Heart left ventricle (tissue), 16 donors: ENCODE measurements at regions of chr1 and their contacts with region 1.

Region 1: DNA sequence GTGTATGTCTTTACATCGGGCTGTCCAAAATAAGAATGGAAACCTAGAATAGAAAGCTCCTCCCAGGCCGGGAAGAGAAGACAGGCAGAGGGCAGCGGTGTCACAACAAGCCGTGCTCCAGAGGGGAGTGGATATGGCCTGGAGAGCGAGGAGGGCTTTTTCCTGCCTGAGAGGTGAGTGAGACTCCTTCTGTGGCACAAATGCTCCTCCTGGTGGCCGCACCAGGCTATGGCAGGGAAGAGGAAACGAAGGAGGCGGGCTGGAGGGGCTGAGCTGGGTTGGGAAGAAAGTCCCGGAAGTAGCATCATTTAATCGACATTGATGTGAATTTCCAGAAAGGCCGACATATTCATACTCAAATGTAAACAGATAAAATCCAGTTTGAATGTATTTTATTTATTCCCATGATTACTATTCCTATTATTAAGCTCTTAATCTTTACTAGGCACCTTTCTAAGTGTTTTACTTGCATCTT is 54.7 kb downstream of the MEF2D start:
- DNase-seq: peak; percentile 69 to 89 (median 78)
- ATAC-seq: peak in 3 of 4 donors; percentile 91 to 94 (median 92)
- H3K4me3 ChIP-seq: no peak overlapping the region
- H3K27ac ChIP-seq: no peak overlapping the region
- H3K4me1 ChIP-seq: peaks cover 0 to 7% (median 0%) of the 10 kb centered on the region in 12 donors
- H3K27me3 ChIP-seq: peaks cover 7 to 61% (median 38%) of the 10 kb centered on the region in 9 donors
- CTCF ChIP-seq: peak; percentile 91 to 98 (median 94)
- POLR2A ChIP-seq: no peak

Region 2: DNA sequence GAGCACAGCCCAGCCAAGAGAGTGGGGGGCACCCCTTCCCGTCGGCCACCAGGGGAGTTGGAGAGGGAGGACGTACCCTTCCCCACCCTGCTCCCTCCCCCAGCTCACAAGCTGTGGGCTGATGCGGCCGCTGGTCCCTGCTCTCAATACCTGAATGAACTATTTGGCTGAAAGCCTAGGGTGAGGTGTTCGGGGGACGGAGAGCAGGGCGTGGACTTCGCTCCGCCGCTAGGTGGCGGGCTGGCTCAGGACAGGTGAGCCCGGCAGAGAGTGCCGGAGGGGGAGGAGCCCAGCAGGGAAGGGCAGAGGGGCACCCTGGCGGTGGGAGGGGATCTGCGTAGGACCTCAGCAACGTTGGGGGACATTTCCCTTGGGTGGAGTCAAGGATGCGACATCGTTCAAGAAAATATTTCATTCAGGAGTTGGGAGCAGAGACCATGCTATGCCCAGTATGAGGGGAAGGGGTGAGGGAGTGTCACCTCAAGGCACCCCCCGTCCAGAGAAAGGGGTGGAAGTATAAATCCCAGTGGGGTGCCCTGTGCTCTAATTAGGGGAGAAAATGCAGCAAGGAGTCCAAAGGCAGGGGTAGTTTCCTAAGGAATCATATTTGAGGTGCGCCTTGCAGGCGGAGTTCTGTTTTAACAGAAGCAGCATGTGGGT is 88.8 kb before region 1 on chr1:
- intact Hi-C with region 1: loop called in 1 of 10 experiments (anchors 10 kb)
- DNase-seq: peak in 4 of 5 donors; percentile 44 to 68 (median 55)
- ATAC-seq: peak; percentile 57 to 89 (median 84)
- H3K4me3 ChIP-seq: peak overlapping the region in 1 of 12 donors; percentile 14
- H3K27ac ChIP-seq: no peak overlapping the region
- H3K4me1 ChIP-seq: peaks cover 0 to 6% (median 0%) of the 10 kb centered on the region in 12 donors
- H3K27me3 ChIP-seq: peaks cover 0 to 38% (median 21%) of the 10 kb centered on the region in 9 donors
- CTCF ChIP-seq: peak; percentile 46 to 84 (median 72)
- POLR2A ChIP-seq: no peak